Caco-2 (cell line): ENCODE measurements at regions of chr6 and their contacts with region 1.

Region 1: GRCh38 chr6:25635886-25636317 is 16.1 kb upstream of the SCGN start:
- DNase-seq: peak; percentile 69 to 81
- H3K4me3 ChIP-seq: no peak overlapping the region
- H3K4me3 Mint-ChIP-seq: no peak overlapping the region
- H3K27ac Mint-ChIP-seq: peak overlapping the region; percentile 8
- H3K4me1 ChIP-seq: peaks cover 42% of the 10 kb centered on the region
- H3K4me1 Mint-ChIP-seq: peaks cover 33% of the 10 kb centered on the region
- H3K27me3 ChIP-seq: no peaks in the 10 kb centered on the region
- H3K27me3 Mint-ChIP-seq: no peaks in the 10 kb centered on the region
- CTCF ChIP-seq: no peak

Region 2: GRCh38 chr6:25472306-25472705 is 163.6 kb before region 1 on chr6:
- CTCF ChIA-PET with region 1: no interaction called
- POLR2A ChIA-PET with region 1: no interaction called
- intact Hi-C with region 1: no loop called
- DNase-seq: no peak
- H3K4me3 ChIP-seq: no peak overlapping the region
- H3K4me3 Mint-ChIP-seq: no peak overlapping the region
- H3K27ac Mint-ChIP-seq: no peak overlapping the region
- H3K4me1 ChIP-seq: no peaks in the 10 kb centered on the region
- H3K4me1 Mint-ChIP-seq: no peaks in the 10 kb centered on the region
- H3K27me3 ChIP-seq: no peaks in the 10 kb centered on the region
- H3K27me3 Mint-ChIP-seq: no peaks in the 10 kb centered on the region
- CTCF ChIP-seq: peak; percentile 6 to 28

Region 3: GRCh38 chr6:25652007-25652515 is 16.2 kb after region 1 on chr6 and contains the start of gene SCGN:
- CTCF ChIA-PET with region 1: interaction called, 3 read pairs
- POLR2A ChIA-PET with region 1: no interaction called
- intact Hi-C with region 1: loop called (anchors 1 kb)
- DNase-seq: peak; percentile 73 to 86
- H3K4me3 ChIP-seq: peak within 1 kb of the TSS; percentile 42
- H3K4me3 Mint-ChIP-seq: peak within 1 kb of the TSS; percentile 75
- H3K27ac Mint-ChIP-seq: no peak within 1 kb of the TSS
- H3K4me1 ChIP-seq: no peaks in the 10 kb centered on the region
- H3K4me1 Mint-ChIP-seq: peaks cover 15% of the 10 kb centered on the region
- H3K27me3 ChIP-seq: no peaks in the 10 kb centered on the region
- H3K27me3 Mint-ChIP-seq: peaks cover 8% of the 10 kb centered on the region
- CTCF ChIP-seq: no peak
- total RNA-seq, gene SCGN: 7.7 and 11.7 TPM in 2 replicates